ENCODE measurements at regions of chr15 and their contacts with region 1.

Region 1: GRCh38 chr15:48861813-48862431 is 16.0 kb upstream of the EID1 start:
- DNase-seq: peak; percentile 81 to 89 (median 88)
- H3K4me3 ChIP-seq: no peak overlapping the region
- H3K27ac ChIP-seq: no peak overlapping the region
- H3K4me1 ChIP-seq: peaks cover 2 to 21% (median 12%) of the 10 kb centered on the region in 4 experiments
- H3K27me3 ChIP-seq: no peaks in the 10 kb centered on the region

Region 2: DNA sequence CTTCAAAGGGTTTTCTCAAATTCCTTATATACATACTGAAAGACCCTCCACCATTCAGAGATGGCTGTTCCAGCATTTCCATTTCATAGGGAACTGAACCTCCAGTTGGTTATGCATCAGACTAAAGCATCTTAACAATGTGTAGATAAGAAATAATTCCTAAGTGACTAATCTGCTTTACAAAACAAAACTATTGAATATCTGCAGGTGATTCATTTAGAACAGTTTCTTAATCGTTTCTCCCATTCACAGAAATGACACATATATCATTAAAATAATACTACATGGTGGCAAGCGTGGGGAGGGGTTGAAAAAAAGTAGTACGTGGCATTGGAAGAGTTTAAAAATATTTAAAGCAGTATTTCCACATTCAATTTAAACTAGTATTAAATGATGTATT is 274.0 kb after region 1 on chr15:
- CTCF ChIA-PET with region 1: interaction called, 10 read pairs
- POLR2A ChIA-PET with region 1: interaction called, 3 read pairs
- DNase-seq: no peak
- H3K4me3 ChIP-seq: no peak overlapping the region
- H3K27ac ChIP-seq: no peak overlapping the region
- H3K4me1 ChIP-seq: peaks cover 0 to 8% (median 0%) of the 10 kb centered on the region in 4 experiments
- H3K27me3 ChIP-seq: no peaks in the 10 kb centered on the region

Measured in common myeloid progenitor, CD34-positive (primary cell).